Naive thymus-derived CD4-positive, alpha-beta T cell (primary cell): ENCODE measurements at regions of chr4 and their contacts with region 1.

Region 1: GRCh38 chr4:142846729-142847596 is 862 bp upstream of the INPP4B start:
- DNase-seq: peak; percentile 39 to 81 (median 75)
- ATAC-seq: peak; percentile 89
- H3K4me3 ChIP-seq: peak overlapping the region; percentile 86
- H3K4me3 Mint-ChIP-seq: peak overlapping the region; percentile 85 to 94 (median 92)
- H3K27ac ChIP-seq: peak overlapping the region; percentile 54
- H3K27ac Mint-ChIP-seq: peak overlapping the region in 5 of 9 donors; percentile 26 to 76 (median 56)
- H3K4me1 ChIP-seq: peaks cover 5 to 7% of the 10 kb centered on the region in 2 donors
- H3K4me1 Mint-ChIP-seq: peaks cover 10 to 28% (median 16%) of the 10 kb centered on the region in 7 donors
- H3K27me3 ChIP-seq: peaks cover 0 to 4% of the 10 kb centered on the region in 2 donors
- H3K27me3 Mint-ChIP-seq: peaks cover 5 to 26% (median 22%) of the 10 kb centered on the region in 5 donors

Region 2: DNA sequence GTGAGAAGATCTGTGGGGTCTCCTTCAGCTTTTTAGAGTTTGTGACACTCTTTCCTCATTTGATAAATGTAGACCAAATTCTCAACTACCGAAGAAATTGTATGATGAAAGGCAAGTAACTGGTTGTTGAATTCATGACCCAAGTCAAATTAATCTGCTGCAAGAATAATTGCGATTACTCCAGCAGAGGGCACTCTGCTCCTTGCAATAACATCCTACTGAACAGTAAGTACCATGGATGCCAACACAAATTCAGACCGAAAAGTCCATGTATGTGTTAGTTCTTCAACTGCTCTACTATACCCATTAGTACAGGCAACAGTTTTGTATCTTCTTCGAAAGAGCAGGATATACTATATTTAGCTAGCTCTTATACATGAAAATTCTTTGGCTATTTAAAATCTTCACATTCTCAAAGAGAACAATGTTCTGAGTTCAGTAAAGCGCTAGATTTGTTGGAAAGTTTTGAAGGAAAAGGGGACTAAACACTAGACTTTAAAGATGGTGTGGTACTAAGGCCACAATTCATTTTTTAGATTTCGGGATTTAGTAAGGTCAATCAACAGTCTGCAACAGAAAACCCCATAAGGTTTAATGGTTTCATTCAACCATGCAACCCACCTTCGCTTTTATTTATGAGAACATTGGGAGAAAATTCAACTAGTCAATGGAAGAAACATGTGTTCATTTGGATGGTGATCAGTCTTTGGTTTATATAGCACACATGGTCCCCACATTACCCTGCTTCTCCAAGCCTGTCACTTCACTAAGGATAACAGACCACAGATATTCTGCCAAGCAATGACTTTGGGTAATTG is 1985.4 kb before region 1 on chr4:
- CTCF ChIA-PET with region 1: no interaction called
- POLR2A ChIA-PET with region 1: no interaction called
- intact Hi-C with region 1: loop called in 1 of 2 experiments (anchors 2 kb)
- DNase-seq: peak in 6 of 9 donors; percentile 4 to 49 (median 36)
- ATAC-seq: peak; percentile 66
- H3K4me3 ChIP-seq: no peak overlapping the region
- H3K4me3 Mint-ChIP-seq: no peak overlapping the region
- H3K27ac ChIP-seq: no peak overlapping the region
- H3K27ac Mint-ChIP-seq: no peak overlapping the region
- H3K4me1 ChIP-seq: no peaks in the 10 kb centered on the region
- H3K4me1 Mint-ChIP-seq: peaks cover 0 to 14% (median 5%) of the 10 kb centered on the region in 7 donors
- H3K27me3 ChIP-seq: no peaks in the 10 kb centered on the region
- H3K27me3 Mint-ChIP-seq: peaks cover 18 to 28% (median 23%) of the 10 kb centered on the region in 5 donors

Region 3: GRCh38 chr4:141307241-141307689 is 1539.7 kb before region 1 on chr4:
- CTCF ChIA-PET with region 1: interaction called, 8 read pairs
- POLR2A ChIA-PET with region 1: no interaction called
- intact Hi-C with region 1: loop called in 1 of 2 experiments (anchors 1 kb)
- DNase-seq: peak; percentile 11 to 57 (median 43)
- ATAC-seq: peak; percentile 94
- H3K4me3 ChIP-seq: no peak overlapping the region
- H3K4me3 Mint-ChIP-seq: no peak overlapping the region
- H3K27ac ChIP-seq: no peak overlapping the region
- H3K27ac Mint-ChIP-seq: no peak overlapping the region
- H3K4me1 ChIP-seq: no peaks in the 10 kb centered on the region
- H3K4me1 Mint-ChIP-seq: peaks cover 0 to 5% (median 0%) of the 10 kb centered on the region in 7 donors
- H3K27me3 ChIP-seq: no peaks in the 10 kb centered on the region
- H3K27me3 Mint-ChIP-seq: peaks cover 0 to 10% (median 4%) of the 10 kb centered on the region in 5 donors

Region 4: DNA sequence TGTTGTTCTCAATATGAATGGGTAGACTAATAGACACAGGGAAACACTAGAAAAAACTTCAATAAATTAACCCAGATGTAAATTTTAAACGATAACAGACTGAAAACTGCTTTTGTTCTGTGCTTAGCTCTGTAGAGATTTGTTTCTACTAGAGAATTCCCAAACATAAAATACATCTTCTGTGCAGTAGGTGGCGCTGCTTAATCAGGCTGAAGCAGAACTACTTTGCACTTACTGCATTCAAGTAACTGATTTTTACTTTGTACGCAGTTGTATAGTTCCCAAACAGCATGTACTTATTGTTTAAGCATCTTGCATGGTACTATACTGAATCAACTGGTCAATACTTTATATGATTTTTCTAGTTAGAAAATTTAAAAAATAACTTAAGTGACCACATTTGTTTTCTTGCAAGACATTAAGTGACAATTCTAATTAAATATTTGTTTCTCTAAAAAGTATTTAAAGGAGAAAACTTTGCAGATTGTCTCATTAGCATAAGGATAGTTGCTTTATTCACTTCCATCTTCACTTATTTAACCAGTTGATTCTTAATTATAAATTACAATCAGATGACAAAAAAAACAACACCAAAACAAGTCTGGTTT is 720.0 kb before region 1 on chr4:
- CTCF ChIA-PET with region 1: interaction called, 11 read pairs
- POLR2A ChIA-PET with region 1: no interaction called
- intact Hi-C with region 1: loop called (anchors 1 kb)
- DNase-seq: peak in 8 of 9 donors; percentile 30 to 73 (median 66)
- ATAC-seq: peak; percentile 83
- H3K4me3 ChIP-seq: no peak overlapping the region
- H3K4me3 Mint-ChIP-seq: no peak overlapping the region
- H3K27ac ChIP-seq: no peak overlapping the region
- H3K27ac Mint-ChIP-seq: peak overlapping the region in 1 of 9 donors; percentile 22
- H3K4me1 ChIP-seq: peaks cover 0 to 32% of the 10 kb centered on the region in 2 donors
- H3K4me1 Mint-ChIP-seq: peaks cover 10 to 38% (median 37%) of the 10 kb centered on the region in 7 donors
- H3K27me3 ChIP-seq: no peaks in the 10 kb centered on the region
- H3K27me3 Mint-ChIP-seq: no peaks in the 10 kb centered on the region

Region 5: DNA sequence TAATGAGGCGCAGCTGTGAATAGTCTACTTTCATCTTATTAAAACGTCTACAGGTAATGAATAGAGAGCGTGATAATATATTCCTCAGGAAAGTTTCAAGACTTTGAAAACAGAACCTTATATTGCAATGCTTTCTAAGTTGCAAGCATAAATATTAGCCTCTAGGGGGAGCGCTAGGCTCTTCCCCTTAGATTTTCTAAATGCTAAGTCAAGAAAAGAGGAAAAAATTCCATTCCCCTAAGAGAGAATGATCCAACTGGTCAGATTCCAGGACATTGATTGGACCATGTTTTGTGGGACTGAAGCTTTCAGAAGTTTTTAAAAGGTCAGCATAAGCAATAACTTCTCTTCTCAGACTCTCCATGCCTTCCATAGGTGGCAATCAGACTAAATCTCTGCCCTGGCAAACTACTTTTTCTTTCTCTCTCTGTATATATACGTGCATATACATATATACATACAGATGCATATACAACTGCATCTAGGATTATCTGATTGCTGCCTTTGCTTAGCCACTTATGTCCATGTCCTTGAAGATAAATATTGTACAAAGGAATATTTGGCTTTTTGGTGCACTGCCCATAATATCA is 493.7 kb before region 1 on chr4:
- CTCF ChIA-PET with region 1: interaction called, 5 read pairs
- POLR2A ChIA-PET with region 1: no interaction called
- intact Hi-C with region 1: loop called (anchors 1 kb)
- DNase-seq: peak in 6 of 9 donors; percentile 21 to 50 (median 46)
- ATAC-seq: peak; percentile 61
- H3K4me3 ChIP-seq: no peak overlapping the region
- H3K4me3 Mint-ChIP-seq: peak overlapping the region in 9 of 10 donors; percentile 38 to 79 (median 70)
- H3K27ac ChIP-seq: peak overlapping the region; percentile 67
- H3K27ac Mint-ChIP-seq: peak overlapping the region; percentile 68 to 95 (median 92)
- H3K4me1 ChIP-seq: peaks cover 69 to 84% of the 10 kb centered on the region in 2 donors
- H3K4me1 Mint-ChIP-seq: peaks cover 58 to 100% (median 97%) of the 10 kb centered on the region in 7 donors
- H3K27me3 ChIP-seq: no peaks in the 10 kb centered on the region
- H3K27me3 Mint-ChIP-seq: no peaks in the 10 kb centered on the region

Region 6: DNA sequence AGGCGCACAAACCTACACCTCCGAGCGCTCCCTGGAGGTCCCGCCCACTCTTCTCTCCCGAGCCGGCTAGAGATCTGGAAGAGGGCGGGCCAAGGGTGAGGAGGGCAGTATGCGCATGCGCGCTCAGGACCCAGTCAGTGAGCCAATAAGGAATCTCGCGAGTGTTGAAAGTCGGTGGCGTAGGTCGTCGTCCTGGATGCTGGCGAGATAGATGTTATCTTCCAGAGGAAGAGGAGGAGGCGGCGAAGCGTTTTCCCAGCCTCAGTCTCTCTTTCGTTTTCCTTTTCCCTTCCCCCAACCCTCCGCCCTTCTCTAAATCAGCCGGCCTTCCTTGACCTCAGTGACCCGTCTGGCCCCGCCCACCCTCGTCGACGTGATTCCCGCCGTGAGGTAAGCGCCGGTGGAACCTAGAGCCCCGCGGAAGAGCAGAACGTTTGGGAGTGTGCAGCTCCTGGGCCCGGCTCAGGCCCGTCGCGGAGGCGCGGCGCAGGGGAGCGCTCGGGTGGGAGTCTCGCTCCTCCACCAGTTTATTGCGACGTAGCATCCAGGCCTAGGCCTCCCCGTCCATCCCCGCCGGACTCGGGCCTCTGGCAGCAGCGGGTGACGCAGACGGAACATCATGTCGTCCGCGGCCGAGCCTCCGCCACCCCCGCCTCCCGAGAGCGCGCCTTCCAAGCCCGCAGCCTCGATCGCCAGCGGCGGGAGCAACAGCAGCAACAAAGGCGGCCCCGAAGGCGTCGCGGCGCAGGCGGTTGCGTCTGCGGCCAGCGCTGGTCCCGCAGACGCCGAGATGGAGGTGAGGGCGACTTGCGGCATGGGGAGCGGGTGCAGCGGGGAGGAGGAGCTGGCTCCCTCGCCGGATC is 666.6 kb after region 1 on chr4 and contains the start of gene SMARCA5:
- CTCF ChIA-PET with region 1: no interaction called
- POLR2A ChIA-PET with region 1: no interaction called
- intact Hi-C with region 1: loop called in 1 of 2 experiments (anchors 10 kb)
- DNase-seq: peak; percentile 93 to 99 (median 98)
- ATAC-seq: peak; percentile 92
- H3K4me3 ChIP-seq: peak within 1 kb of the TSS; percentile 91
- H3K4me3 Mint-ChIP-seq: peak within 1 kb of the TSS; percentile 93 to 100 (median 98)
- H3K27ac ChIP-seq: peak within 1 kb of the TSS; percentile 98
- H3K27ac Mint-ChIP-seq: peak within 1 kb of the TSS; percentile 97 to 100 (median 100)
- H3K4me1 ChIP-seq: peaks cover 20 to 36% of the 10 kb centered on the region in 2 donors
- H3K4me1 Mint-ChIP-seq: peaks cover 22 to 54% (median 37%) of the 10 kb centered on the region in 7 donors
- H3K27me3 ChIP-seq: no peaks in the 10 kb centered on the region
- H3K27me3 Mint-ChIP-seq: peaks cover 0 to 30% (median 0%) of the 10 kb centered on the region in 5 donors
- total RNA-seq, gene SMARCA5: 48.3 to 58.2 (median 54.4) TPM